ENCODE measurements at regions of chr15 and their contacts with region 1.

Region 1: GRCh38 chr15:40593588-40594428 is at the start of gene KNL1:
- DNase-seq: peak; percentile 92
- ATAC-seq: peak; percentile 75
- H3K4me3 ChIP-seq: peak within 1 kb of the TSS; percentile 74 to 83 (median 81)
- H3K27ac ChIP-seq: peak within 1 kb of the TSS; percentile 94
- H3K4me1 ChIP-seq: peaks cover 39% of the 10 kb centered on the region
- H3K27me3 ChIP-seq: no peaks in the 10 kb centered on the region; a peak in 1 of 5 replicates
- CTCF ChIP-seq: no peak
- EP300 ChIP-seq: peak; percentile 30 to 56; a peak in 2 of 4 replicates
- POLR2A ChIP-seq: peak; percentile 47 to 77; a peak in 2 of 4 replicates
- RAD21 ChIP-seq: no peak
- total RNA-seq, gene KNL1: 21.4 and 34.5 TPM in 2 replicates

Region 2: DNA sequence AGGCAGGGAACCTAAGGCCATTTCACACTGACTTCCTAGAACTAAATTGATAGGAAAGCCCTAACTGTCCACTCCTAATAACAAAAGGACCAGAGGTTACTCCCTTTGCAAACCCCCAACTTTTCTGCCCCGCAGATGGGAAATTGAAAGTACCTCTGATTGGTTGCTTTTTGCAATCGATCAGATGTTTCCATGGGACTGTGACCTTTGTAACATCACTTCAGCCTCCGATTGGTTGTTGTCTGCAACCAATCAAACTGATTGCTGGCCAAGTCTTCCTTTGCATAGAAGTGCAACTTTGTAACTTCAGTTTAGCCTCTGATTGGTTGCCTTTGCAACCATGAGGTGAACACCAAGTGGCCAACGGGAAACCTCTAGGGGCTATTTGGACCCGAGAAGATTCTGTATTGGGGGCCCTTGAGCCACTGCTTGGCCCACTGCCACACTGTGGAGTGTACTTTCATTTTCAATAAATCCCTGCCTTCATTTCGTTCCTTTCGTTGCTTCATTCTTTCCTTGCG is 11.0 kb before region 1 on chr15:
- CTCF ChIA-PET with region 1: no interaction called
- POLR2A ChIA-PET with region 1: interaction called, 5 read pairs
- in situ Hi-C with region 1: no loop called
- intact Hi-C with region 1: loop called (anchors 1 kb)
- DNase-seq: peak; percentile 99
- ATAC-seq: peak; percentile 94
- H3K4me3 ChIP-seq: peak overlapping the region; percentile 70 to 72 (median 72)
- H3K27ac ChIP-seq: peak overlapping the region; percentile 91
- H3K4me1 ChIP-seq: peaks cover 15% of the 10 kb centered on the region
- H3K27me3 ChIP-seq: no peaks in the 10 kb centered on the region
- CTCF ChIP-seq: no peak
- EP300 ChIP-seq: peak in 1 of 2 experiments; percentile 50; a peak in 1 of 4 replicates
- POLR2A ChIP-seq: peak; percentile 28 to 40; a peak in 2 of 4 replicates
- RAD21 ChIP-seq: no peak

Region 3: DNA sequence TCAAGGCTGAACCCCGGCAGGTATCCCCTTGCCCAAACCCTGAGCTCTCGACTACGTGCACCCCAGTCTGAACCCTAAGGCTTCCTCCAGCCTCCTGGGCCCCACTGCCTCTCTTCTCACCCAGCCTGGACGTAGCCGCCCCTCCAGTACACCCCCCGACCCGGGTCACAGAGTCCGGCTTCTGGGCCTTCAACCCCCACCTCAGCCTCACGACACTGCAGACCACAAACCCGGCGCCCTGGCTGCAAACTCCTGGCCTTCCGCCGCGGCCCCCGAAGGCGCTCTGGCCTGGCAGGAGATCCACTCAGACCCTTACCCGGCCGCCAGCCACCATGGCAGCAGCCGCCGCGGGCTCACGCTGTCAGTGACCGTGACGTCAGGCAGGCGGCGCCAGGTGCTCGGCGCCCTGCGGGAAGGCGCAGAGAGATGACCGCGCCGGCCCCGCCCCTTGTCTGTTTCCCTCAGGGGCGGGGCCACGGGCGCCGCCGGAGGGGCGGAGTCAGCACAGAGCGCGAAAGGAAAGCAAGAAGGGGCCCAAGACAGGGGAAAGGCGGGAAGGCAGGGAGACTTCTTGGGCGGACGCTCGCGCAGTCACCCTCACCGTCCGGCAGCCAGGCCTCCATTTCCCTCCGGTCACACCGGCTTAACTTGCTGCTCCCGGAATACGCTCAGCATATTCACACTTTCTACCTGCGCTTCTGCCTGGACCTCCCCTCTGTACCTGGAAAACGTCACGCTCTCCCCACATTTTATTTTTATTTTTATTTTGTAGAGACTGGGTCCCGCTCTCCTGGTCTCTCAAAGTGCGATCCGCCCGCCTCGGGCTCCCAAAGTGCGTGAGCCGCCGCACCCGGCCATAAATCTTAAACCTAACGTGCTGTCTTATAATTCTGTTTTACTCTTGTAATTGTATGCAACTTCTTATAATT is 161.3 kb after region 1 on chr15 and contains the start of gene RMDN3:
- CTCF ChIA-PET with region 1: no interaction called
- POLR2A ChIA-PET with region 1: no interaction called
- in situ Hi-C with region 1: no loop called
- intact Hi-C with region 1: loop called (anchors 10 kb)
- DNase-seq: peak; percentile 77
- ATAC-seq: peak; percentile 87
- H3K4me3 ChIP-seq: peak within 1 kb of the TSS; percentile 83 to 98 (median 89)
- H3K27ac ChIP-seq: peak within 1 kb of the TSS; percentile 84
- H3K4me1 ChIP-seq: peaks cover 54% of the 10 kb centered on the region
- H3K27me3 ChIP-seq: no peaks in the 10 kb centered on the region
- CTCF ChIP-seq: peak; percentile 35
- EP300 ChIP-seq: no peak; a peak in 1 of 4 replicates
- POLR2A ChIP-seq: peak; percentile 79 to 91
- RAD21 ChIP-seq: no peak
- total RNA-seq, gene RMDN3: 10.5 and 19.5 TPM in 2 replicates